ENCODE measurements at regions of chr2 and their contacts with region 1.

Region 1: DNA sequence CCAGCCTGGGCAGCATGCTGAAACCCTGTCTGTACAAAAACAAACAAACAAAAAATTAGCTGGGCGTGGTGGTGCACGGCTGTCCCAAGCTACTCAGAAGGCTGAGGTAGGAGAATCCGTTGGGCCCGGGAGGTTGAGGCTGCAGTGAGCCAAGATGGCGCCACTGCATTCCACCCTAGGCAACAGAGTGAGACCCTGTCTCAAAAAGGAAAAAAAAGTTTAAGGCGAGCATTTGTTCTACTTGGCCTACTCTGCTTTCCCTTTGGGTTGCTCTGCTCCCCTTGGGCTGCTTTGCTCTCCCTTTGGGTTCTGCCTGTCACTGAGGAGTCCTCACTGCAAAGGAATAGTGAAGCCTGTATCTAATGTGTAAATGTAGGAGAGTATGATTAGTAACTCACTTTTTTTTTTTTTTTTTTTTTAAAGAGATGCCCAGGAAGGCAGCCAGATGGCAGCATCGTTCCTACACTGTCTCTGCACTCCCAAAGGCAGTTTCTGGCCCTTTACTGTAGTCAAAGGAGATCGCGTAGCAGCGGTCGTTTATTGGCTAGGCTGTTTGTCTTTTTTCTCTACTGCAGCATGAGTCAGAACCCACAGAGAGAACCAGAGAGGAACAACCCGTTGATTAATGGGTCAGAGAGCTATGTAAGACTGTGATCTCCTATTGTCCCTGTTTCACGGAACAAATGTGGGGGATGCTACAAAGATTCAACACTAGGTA is 118.3 kb upstream of the CWC22 start:
- DNase-seq: peak; percentile 88
- H3K4me3 ChIP-seq: no peak overlapping the region
- H3K27ac ChIP-seq: no peak overlapping the region
- H3K4me1 ChIP-seq: no peaks in the 10 kb centered on the region
- H3K27me3 ChIP-seq: peaks cover 4% of the 10 kb centered on the region
- CTCF ChIP-seq: peak; percentile 73

Region 2: DNA sequence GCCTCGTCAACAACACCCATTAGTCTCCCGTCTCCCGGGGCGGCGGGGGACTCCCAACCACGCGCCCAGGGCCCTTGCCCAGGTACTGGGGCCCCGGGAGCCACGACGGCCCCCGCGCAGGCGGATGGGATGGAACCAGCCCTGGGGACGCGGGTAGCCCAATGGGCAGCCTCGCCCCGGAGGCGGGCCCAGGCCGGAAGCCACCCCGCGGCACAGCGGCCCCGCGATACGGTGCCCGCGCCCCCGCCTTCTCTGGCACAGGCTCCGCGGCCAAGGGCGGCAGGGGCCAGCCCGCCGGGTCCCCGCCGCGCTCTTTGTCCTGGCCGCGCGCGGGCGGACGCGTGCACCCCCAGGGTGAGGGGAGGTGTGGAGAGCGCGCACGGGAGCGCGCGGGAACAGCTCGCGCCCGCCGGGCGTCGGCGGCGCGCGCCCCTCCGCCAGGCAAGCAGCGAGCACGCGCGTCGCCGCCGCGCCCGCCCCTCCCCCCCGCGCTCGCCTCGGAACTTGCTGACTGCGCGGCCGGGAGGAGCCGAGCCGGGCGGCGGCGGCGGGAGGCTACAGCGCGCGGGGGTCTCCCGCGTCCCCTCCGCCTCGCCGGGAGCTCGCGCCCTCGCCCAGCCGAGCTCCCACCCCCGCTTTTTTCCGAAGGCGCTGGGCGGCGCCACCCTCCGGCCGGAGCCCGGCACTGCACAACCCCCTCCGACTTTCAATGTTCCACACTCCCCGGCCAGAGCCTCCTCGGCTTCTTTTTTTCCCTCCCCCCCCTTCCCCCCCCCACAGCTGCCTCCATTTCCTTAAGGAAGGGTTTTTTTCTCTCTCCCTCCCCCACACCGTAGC is 854.9 kb after region 1 on chr2 and contains the start of gene UBE2E3:
- CTCF ChIA-PET with region 1: interaction called, 6 read pairs
- POLR2A ChIA-PET with region 1: no interaction called
- intact Hi-C with region 1: loop called (anchors 2 kb)
- DNase-seq: peak; percentile 88
- H3K4me3 ChIP-seq: peak within 1 kb of the TSS; percentile 68
- H3K27ac ChIP-seq: peak within 1 kb of the TSS; percentile 78
- H3K4me1 ChIP-seq: peaks cover 22% of the 10 kb centered on the region
- H3K27me3 ChIP-seq: no peaks in the 10 kb centered on the region
- CTCF ChIP-seq: peak; percentile 66
- total RNA-seq, gene UBE2E3: 93.1 and 103 TPM in 2 replicates

Region 3: DNA sequence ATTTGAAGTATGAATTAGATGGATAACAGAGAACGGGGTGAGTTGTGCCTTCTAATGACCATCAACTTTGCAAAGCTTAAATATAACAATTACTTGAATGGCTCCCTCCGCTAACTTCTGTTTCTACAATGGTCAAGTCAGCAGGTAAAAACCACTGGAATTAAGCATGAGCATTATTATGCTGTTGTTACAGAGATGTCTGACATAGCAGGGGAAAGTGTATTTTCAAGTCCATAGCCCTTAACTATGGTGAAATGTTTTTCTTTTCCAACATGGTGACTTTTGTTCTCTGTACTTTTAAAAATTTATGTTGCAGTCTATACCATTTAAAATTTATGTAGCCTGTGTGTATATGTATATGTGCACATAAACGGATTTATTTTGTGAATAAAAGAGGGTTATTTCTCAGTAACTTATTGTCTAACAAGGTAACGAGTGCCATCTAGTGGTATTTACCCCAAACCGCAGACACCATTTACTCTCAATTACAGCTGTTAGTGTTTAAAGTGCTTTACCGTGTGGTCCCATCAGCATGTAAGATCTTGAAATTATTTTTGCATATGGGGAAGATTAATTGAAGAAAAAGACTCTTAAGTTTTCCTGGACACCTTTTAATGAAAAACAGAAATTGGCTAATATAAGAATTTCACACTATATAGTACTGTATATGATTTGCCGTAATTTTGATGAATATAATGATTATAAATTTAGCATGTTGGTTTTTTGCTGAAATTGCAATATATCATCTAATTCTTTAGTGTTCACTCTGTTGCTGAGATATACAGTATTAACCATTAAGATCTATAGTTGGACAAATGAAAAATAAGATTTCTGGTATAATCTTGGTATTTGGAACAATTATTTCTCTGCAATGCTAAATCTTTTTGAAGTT is 933.2 kb after region 1 on chr2:
- CTCF ChIA-PET with region 1: no interaction called
- POLR2A ChIA-PET with region 1: no interaction called
- intact Hi-C with region 1: loop called (anchors 2 kb)
- DNase-seq: peak; percentile 58
- H3K4me3 ChIP-seq: no peak overlapping the region
- H3K27ac ChIP-seq: no peak overlapping the region
- H3K4me1 ChIP-seq: no peaks in the 10 kb centered on the region
- H3K27me3 ChIP-seq: no peaks in the 10 kb centered on the region
- CTCF ChIP-seq: peak; percentile 77

Region 4: GRCh38 chr2:181077128-181077709 is 951.8 kb after region 1 on chr2:
- CTCF ChIA-PET with region 1: no interaction called
- POLR2A ChIA-PET with region 1: no interaction called
- intact Hi-C with region 1: loop called (anchors 5 kb)
- DNase-seq: peak; percentile 72
- H3K4me3 ChIP-seq: no peak overlapping the region
- H3K27ac ChIP-seq: no peak overlapping the region
- H3K4me1 ChIP-seq: no peaks in the 10 kb centered on the region
- H3K27me3 ChIP-seq: no peaks in the 10 kb centered on the region
- CTCF ChIP-seq: peak; percentile 82

Region 5: DNA sequence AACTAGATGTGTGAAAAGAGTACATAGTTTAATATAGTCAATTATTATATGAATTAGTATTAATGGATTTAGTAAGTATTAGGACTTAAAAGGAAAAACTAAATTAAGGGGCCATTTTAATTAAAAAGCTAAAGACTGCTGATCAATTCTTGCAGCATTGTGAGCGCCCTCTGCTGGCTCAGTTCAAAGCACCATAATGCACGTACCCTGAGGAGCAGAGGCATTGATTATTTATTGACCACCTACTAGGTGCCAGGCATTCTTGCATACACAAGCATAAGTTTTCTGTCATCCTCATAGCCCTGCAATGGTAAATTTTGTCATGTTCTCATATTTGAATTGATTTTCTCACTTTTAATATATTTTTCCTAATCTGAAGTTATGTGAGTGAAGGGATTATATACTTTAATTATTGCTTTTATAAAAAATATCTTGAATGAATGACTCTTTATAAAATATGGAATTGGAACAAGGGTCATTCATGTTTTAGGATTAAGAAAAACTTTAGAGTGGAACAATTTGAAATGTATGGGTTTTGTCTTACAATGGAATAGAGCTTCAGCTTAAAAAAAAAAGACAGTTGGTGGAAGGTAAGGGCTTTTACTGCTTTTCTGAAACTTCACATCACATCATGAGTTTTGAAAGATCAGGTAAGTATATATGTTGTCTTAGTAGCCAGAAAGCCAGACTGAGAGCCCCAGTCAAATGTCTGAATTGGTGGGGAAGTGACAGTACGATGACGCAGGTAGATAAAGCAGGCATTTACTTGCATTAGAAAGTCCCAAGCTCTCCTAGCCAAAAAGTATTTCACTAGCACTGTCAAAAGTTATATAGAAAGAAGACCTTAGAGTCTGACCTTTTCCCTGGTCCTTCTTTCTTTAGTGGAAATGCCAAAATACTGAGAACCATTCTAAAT is 1341.5 kb after region 1 on chr2:
- CTCF ChIA-PET with region 1: no interaction called
- POLR2A ChIA-PET with region 1: no interaction called
- intact Hi-C with region 1: loop called (anchors 10 kb)
- DNase-seq: peak; percentile 60
- H3K4me3 ChIP-seq: no peak overlapping the region
- H3K27ac ChIP-seq: no peak overlapping the region
- H3K4me1 ChIP-seq: peaks cover 8% of the 10 kb centered on the region
- H3K27me3 ChIP-seq: no peaks in the 10 kb centered on the region
- CTCF ChIP-seq: peak; percentile 94

Region 6: GRCh38 chr2:181573140-181573736 is 1447.8 kb after region 1 on chr2:
- CTCF ChIA-PET with region 1: no interaction called
- POLR2A ChIA-PET with region 1: no interaction called
- intact Hi-C with region 1: loop called (anchors 10 kb)
- DNase-seq: peak; percentile 53
- H3K4me3 ChIP-seq: no peak overlapping the region
- H3K27ac ChIP-seq: no peak overlapping the region
- H3K4me1 ChIP-seq: peaks cover 13% of the 10 kb centered on the region
- H3K27me3 ChIP-seq: no peaks in the 10 kb centered on the region
- CTCF ChIP-seq: peak; percentile 67

Region 7: GRCh38 chr2:181715033-181715630 is 1589.7 kb after region 1 on chr2:
- CTCF ChIA-PET with region 1: interaction called, 5 read pairs
- POLR2A ChIA-PET with region 1: no interaction called
- intact Hi-C with region 1: loop called (anchors 1 kb)
- DNase-seq: peak; percentile 85
- H3K4me3 ChIP-seq: no peak overlapping the region
- H3K27ac ChIP-seq: no peak overlapping the region
- H3K4me1 ChIP-seq: no peaks in the 10 kb centered on the region
- H3K27me3 ChIP-seq: no peaks in the 10 kb centered on the region
- CTCF ChIP-seq: peak; percentile 81

Measured in A673 (cell line).